ENCODE measurements at regions of chr15 and their contacts with region 1.

Region 1: GRCh38 chr15:55969566-55969965 is 23.8 kb downstream of the NEDD4 start:
- DNase-seq: no peak
- H3K4me3 ChIP-seq: no peak overlapping the region
- H3K27ac ChIP-seq: no peak overlapping the region
- H3K4me1 ChIP-seq: no peaks in the 10 kb centered on the region
- H3K27me3 ChIP-seq: no peaks in the 10 kb centered on the region
- CTCF ChIP-seq: no peak

Region 2: GRCh38 chr15:55574096-55574495 is 395.5 kb before region 1 on chr15:
- CTCF ChIA-PET with region 1: no interaction called
- POLR2A ChIA-PET with region 1: no interaction called
- intact Hi-C with region 1: no loop called
- DNase-seq: no peak
- H3K4me3 ChIP-seq: no peak overlapping the region
- H3K27ac ChIP-seq: no peak overlapping the region
- H3K4me1 ChIP-seq: no peaks in the 10 kb centered on the region
- H3K27me3 ChIP-seq: no peaks in the 10 kb centered on the region
- CTCF ChIP-seq: no peak

Region 3: DNA sequence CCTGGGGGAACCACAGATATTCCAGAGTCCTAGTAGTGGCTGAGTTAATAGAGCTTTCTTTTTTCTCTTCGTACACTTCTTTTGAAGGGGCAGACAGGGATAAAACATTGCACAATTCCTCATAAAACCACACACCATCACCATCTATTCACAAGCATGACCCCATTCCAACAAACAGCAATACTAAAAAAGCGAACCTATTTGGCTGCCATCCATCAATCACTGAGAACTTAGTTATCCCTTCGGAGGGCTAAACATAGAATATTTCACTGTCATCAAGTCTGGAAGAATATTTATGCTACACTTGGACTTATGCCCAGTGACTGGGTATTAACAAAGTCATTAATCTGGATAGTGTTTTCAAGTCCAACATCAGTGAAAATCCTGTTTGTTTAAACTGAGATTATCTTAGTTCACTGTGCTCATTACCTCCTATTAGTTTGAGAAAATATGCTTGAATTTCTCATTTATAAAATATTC is 146.3 kb before region 1 on chr15:
- CTCF ChIA-PET with region 1: no interaction called
- POLR2A ChIA-PET with region 1: no interaction called
- intact Hi-C with region 1: no loop called
- DNase-seq: peak; percentile 86
- H3K4me3 ChIP-seq: no peak overlapping the region
- H3K27ac ChIP-seq: no peak overlapping the region
- H3K4me1 ChIP-seq: peaks cover 13% of the 10 kb centered on the region
- H3K27me3 ChIP-seq: no peaks in the 10 kb centered on the region
- CTCF ChIP-seq: no peak

Region 4: DNA sequence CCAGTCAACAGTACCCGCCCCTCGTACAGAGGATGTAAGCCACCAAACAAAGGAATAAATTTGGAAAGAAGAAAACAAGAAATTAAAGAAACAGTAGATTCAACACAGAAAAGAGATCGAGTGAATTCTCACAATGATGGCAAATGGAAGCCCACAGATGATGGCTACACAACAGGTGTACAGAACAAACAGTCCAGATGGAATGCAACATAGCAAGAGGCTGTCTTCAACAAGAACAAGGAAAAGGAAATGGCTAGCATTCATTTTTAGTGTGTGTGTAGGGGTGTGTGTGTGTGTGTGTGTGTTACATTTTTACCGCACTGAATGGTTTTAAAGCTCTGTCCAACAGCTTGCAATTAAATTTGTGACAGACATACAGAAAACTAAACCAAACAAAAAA is 10.9 kb after region 1 on chr15:
- CTCF ChIA-PET with region 1: no interaction called
- POLR2A ChIA-PET with region 1: interaction called, 11 read pairs
- intact Hi-C with region 1: no loop called
- DNase-seq: no peak
- H3K4me3 ChIP-seq: no peak overlapping the region
- H3K27ac ChIP-seq: no peak overlapping the region
- H3K4me1 ChIP-seq: no peaks in the 10 kb centered on the region
- H3K27me3 ChIP-seq: no peaks in the 10 kb centered on the region
- CTCF ChIP-seq: no peak

Measured in A673 (cell line).